Heart right ventricle (tissue), 16 donors: ENCODE measurements at regions of chr2 and their contacts with region 1.

Region 1: GRCh38 chr2:195656859-195657633 is at the start of gene SLC39A10:
- DNase-seq: peak; percentile 96 to 97
- ATAC-seq: peak; percentile 90 to 96 (median 92)
- H3K4me3 ChIP-seq: peak within 1 kb of the TSS; percentile 61 to 97 (median 92)
- H3K27ac ChIP-seq: peak within 1 kb of the TSS; percentile 90 to 99 (median 98)
- H3K4me1 ChIP-seq: peaks cover 0 to 46% (median 28%) of the 10 kb centered on the region in 9 donors
- H3K27me3 ChIP-seq: no peaks in the 10 kb centered on the region
- CTCF ChIP-seq: peak in 4 of 9 donors; percentile 20 to 42 (median 40)
- total RNA-seq, gene SLC39A10: 7.5 to 12.9 (median 9.0) TPM

Region 2: DNA sequence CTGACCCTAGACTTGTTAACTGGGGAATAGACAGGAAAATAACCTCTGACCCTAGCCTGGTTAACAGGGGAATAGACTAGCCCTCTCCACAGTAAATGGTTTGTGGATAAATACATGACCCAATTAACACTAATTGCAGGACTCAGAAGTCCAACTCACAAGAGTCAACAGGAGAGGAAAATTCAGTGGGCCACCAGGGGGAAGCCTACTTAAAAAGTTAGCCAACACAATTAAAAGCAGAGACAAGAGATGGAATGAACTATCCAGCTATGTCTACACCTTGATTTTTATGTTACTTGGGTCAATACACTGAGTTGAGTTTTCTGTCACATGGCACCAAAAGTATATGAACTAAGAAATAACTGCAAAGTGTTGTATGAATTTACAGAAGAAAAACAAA is 158.9 kb before region 1 on chr2:
- intact Hi-C with region 1: loop called in 6 of 10 experiments (anchors 5 to 10 kb)
- DNase-seq: no peak
- ATAC-seq: no peak
- H3K4me3 ChIP-seq: no peak overlapping the region
- H3K27ac ChIP-seq: no peak overlapping the region
- H3K4me1 ChIP-seq: no peaks in the 10 kb centered on the region
- H3K27me3 ChIP-seq: no peaks in the 10 kb centered on the region
- CTCF ChIP-seq: peak in 7 of 9 donors; percentile 8 to 56 (median 41)

Region 3: DNA sequence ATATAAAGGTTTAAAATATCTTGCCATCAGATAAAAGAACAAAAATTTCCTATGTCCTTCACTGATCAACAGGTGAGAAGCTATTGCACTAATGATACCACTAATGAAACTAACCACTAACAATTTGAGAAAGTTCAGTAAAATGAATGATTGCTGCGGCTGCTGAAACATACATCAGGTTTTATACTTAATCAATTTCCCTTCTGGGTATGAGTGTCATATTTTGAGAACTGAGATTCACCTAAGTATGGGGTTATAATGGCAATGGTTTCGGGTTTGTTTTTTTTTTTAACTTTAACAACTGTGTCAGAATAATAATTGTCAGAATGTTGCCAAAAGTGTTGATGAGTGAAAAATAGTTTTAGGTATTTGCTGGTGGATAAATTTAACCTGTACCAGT is 151.3 kb before region 1 on chr2:
- intact Hi-C with region 1: loop called in 2 of 10 experiments (anchors 10 kb)
- DNase-seq: no peak
- ATAC-seq: no peak
- H3K4me3 ChIP-seq: no peak overlapping the region
- H3K27ac ChIP-seq: no peak overlapping the region
- H3K4me1 ChIP-seq: no peaks in the 10 kb centered on the region
- H3K27me3 ChIP-seq: no peaks in the 10 kb centered on the region
- CTCF ChIP-seq: no peak

Region 4: GRCh38 chr2:195575879-195576401 is 81.1 kb before region 1 on chr2:
- intact Hi-C with region 1: loop called (anchors 2 to 10 kb)
- DNase-seq: no peak
- ATAC-seq: peak in 4 of 8 donors; percentile 31 to 70 (median 46)
- H3K4me3 ChIP-seq: no peak overlapping the region
- H3K27ac ChIP-seq: no peak overlapping the region
- H3K4me1 ChIP-seq: peaks cover 0 to 41% (median 0%) of the 10 kb centered on the region in 9 donors
- H3K27me3 ChIP-seq: no peaks in the 10 kb centered on the region
- CTCF ChIP-seq: peak; percentile 7 to 60 (median 45)

Region 5: GRCh38 chr2:195586062-195586714 is 70.9 kb before region 1 on chr2:
- intact Hi-C with region 1: loop called in 4 of 10 experiments (anchors 5 to 10 kb)
- DNase-seq: no peak
- ATAC-seq: peak in 3 of 8 donors; percentile 38 to 53 (median 49)
- H3K4me3 ChIP-seq: no peak overlapping the region
- H3K27ac ChIP-seq: no peak overlapping the region
- H3K4me1 ChIP-seq: peaks cover 0 to 20% (median 0%) of the 10 kb centered on the region in 9 donors
- H3K27me3 ChIP-seq: no peaks in the 10 kb centered on the region
- CTCF ChIP-seq: no peak

Region 6: DNA sequence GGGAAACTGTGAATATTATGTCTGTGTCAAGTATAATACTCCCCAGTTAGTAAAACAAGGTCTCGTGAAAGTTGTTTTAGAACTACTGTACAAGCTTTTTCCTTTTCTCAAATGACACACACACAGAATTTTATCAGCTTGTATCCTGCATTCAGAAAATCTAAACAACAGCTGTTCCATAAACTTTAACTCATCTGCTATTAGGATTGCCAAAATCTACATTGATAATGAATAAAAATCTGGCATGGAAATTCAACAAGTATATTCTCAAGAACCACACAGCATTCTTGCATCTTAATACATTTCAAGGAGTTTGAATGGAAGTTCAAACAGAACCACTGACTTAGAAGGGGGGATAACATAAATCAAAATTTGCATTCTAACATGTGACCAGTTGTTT is 151.1 kb after region 1 on chr2:
- intact Hi-C with region 1: no loop called
- DNase-seq: no peak
- ATAC-seq: no peak
- H3K4me3 ChIP-seq: no peak overlapping the region
- H3K27ac ChIP-seq: no peak overlapping the region
- H3K4me1 ChIP-seq: no peaks in the 10 kb centered on the region
- H3K27me3 ChIP-seq: no peaks in the 10 kb centered on the region
- CTCF ChIP-seq: no peak

Region 7: GRCh38 chr2:196068271-196069209 is 411.5 kb after region 1 on chr2 and contains the start of gene DNAH7:
- intact Hi-C with region 1: loop called in 4 of 10 experiments (anchors 10 kb)
- DNase-seq: peak; percentile 89 to 91
- ATAC-seq: peak; percentile 97 to 99 (median 98)
- H3K4me3 ChIP-seq: peak within 1 kb of the TSS; percentile 51 to 92 (median 78)
- H3K27ac ChIP-seq: peak within 1 kb of the TSS in 8 of 10 donors; percentile 8 to 76 (median 50)
- H3K4me1 ChIP-seq: peaks cover 0 to 12% (median 7%) of the 10 kb centered on the region in 9 donors
- H3K27me3 ChIP-seq: no peaks in the 10 kb centered on the region
- CTCF ChIP-seq: peak in 6 of 9 donors; percentile 17 to 96 (median 90)
- total RNA-seq, gene DNAH7: 0.10 to 0.74 (median 0.22) TPM in 9 of 10 donors, not detected in the other